Naive thymus-derived CD8-positive, alpha-beta T cell (primary cell): ENCODE measurements at regions of chr15 and their contacts with region 1.

Region 1: GRCh38 chr15:64925335-64926310 is 13.9 kb downstream of the ANKDD1A start:
- DNase-seq: no peak
- ATAC-seq: no peak
- H3K4me3 Mint-ChIP-seq: no peak overlapping the region
- H3K27ac Mint-ChIP-seq: peak overlapping the region in 1 of 10 donors; percentile 24
- H3K4me1 Mint-ChIP-seq: peaks cover 0 to 5% (median 0%) of the 10 kb centered on the region in 4 donors
- H3K27me3 Mint-ChIP-seq: no peaks in the 10 kb centered on the region

Region 2: DNA sequence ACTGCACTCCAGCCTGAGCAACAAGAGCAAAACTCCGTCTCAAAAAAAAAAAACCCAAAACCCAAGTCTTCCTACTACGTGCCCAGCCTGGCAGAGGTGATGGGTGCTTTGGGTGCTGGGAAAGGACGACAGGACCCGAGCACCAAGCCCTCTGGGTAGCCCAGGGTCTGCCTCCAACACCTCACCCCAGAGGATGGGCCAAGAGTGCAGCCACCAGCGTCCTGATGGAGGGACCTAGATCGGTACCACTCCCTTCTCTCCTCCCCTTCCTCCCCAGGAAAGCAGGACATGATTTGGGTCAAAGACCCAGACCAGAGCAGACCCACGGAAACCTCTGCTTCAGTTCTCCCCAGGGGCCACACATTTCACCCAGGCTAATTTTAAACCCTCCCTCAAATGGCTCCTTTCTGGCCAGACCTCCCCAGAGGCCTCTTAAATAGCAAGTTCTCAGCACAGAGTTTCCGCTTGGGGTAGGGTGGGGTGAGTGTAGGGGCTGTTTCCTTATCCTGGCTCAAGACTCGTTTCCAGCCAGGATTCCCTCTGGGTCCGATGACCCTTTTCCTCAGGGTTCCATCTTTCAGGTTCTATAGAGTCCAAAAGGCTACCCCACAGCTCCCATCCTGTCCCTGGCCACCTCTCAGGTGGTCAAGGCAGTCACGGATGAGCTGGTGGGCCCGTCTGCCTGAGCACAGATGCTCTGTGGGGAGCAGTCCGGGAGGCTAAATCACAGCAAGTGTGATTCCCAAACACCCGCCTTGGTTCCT is 170.8 kb before region 1 on chr15:
- POLR2A ChIA-PET with region 1: no interaction called
- DNase-seq: no peak
- ATAC-seq: no peak
- H3K4me3 Mint-ChIP-seq: peak overlapping the region in 1 of 10 donors; percentile 53
- H3K27ac Mint-ChIP-seq: no peak overlapping the region
- H3K4me1 Mint-ChIP-seq: peaks cover 0 to 20% (median 0%) of the 10 kb centered on the region in 4 donors
- H3K27me3 Mint-ChIP-seq: peaks cover 0 to 3% (median 0%) of the 10 kb centered on the region in 5 donors

Region 3: GRCh38 chr15:64883997-64884511 is 41.6 kb before region 1 on chr15:
- POLR2A ChIA-PET with region 1: interaction called, 10 read pairs
- DNase-seq: peak; percentile 46 to 83 (median 66)
- ATAC-seq: peak; percentile 78 to 80
- H3K4me3 Mint-ChIP-seq: peak overlapping the region in 6 of 10 donors; percentile 5 to 81 (median 50)
- H3K27ac Mint-ChIP-seq: peak overlapping the region in 6 of 10 donors; percentile 23 to 95 (median 80)
- H3K4me1 Mint-ChIP-seq: peaks cover 18 to 41% (median 28%) of the 10 kb centered on the region in 4 donors
- H3K27me3 Mint-ChIP-seq: no peaks in the 10 kb centered on the region

Region 4: DNA sequence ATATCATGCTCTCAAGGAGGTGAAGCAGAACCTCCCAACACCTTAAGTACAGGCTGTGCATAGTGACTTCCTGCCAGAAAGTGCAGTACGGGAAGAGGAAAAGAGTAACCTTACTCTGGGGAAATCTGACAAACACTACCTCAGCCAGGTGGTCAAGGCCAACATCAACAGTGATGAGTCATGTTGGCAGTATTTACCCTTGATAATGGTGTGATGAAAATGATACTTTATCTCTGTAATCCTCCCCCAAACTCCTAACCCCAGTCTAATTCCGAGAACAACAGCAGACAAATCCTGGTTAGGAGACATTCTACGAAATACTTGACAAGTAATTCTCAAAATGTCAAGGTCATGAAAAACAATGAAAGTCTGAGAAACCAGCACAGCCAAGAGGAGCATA is 12.6 kb after region 1 on chr15:
- POLR2A ChIA-PET with region 1: no interaction called
- DNase-seq: no peak
- ATAC-seq: no peak
- H3K4me3 Mint-ChIP-seq: no peak overlapping the region
- H3K27ac Mint-ChIP-seq: no peak overlapping the region
- H3K4me1 Mint-ChIP-seq: no peaks in the 10 kb centered on the region
- H3K27me3 Mint-ChIP-seq: no peaks in the 10 kb centered on the region